A673 (cell line): ENCODE measurements at regions of chr19 and their contacts with region 1.

Region 1: DNA sequence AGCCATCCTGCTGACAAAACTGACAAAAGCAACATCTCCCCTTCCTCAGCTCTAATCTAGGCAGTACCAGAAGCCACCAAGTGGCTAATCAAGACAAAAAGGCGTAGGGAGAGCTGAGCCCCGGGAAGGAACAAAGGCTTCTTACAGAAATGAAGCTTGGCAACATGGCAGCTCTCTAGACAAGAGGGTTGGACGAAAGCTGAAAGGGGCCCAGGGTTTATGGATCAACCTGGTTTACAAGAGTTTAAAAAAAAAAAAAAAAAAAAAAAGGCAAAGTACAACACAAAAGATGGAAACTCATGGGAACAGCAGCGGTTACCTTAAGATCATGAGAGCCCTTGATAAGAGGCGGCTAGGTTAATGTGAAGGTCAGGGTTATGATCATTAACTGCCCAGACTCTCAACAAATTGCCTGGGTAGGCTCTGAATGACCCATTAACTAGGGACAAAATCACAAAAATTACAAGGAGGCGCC is 14.0 kb downstream of the ZC3H4 start:
- DNase-seq: no peak
- H3K4me3 ChIP-seq: no peak overlapping the region
- H3K27ac ChIP-seq: no peak overlapping the region
- H3K4me1 ChIP-seq: peaks cover 17% of the 10 kb centered on the region
- H3K27me3 ChIP-seq: no peaks in the 10 kb centered on the region
- CTCF ChIP-seq: no peak

Region 2: DNA sequence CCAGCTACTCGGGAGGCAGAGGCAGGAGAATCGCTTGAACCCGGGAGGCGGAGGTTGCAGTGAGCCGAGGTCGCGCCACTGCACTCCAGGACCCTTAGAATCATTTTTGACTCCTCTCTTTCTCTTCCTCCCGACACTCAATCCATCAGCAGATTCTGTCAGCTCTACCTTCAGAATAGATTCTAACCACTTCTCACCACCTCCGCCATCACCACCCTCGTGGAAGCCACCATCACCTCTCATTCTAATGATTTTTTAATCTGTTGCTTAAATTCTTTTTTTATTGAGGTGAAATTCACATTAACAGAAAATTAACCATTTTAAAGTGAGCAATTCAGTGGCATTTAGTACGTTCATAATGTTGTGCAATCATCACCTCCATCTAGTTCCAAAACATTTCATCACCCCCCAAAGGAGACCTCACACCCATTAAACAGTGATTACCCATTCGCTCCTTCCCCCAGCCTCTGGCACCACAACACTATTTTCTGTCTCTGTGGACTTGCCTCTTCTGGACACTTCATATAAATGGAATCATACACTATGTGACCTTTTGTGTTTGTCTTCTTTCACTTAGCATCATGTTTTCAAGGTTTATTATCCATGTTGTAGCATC is 1109.4 kb before region 1 on chr19:
- CTCF ChIA-PET with region 1: no interaction called
- POLR2A ChIA-PET with region 1: no interaction called
- intact Hi-C with region 1: no loop called
- DNase-seq: no peak
- H3K4me3 ChIP-seq: no peak overlapping the region
- H3K27ac ChIP-seq: no peak overlapping the region
- H3K4me1 ChIP-seq: no peaks in the 10 kb centered on the region
- H3K27me3 ChIP-seq: no peaks in the 10 kb centered on the region
- CTCF ChIP-seq: no peak

Region 3: GRCh38 chr19:47013041-47013517 is 86.5 kb before region 1 on chr19:
- CTCF ChIA-PET with region 1: interaction called, 11 read pairs
- POLR2A ChIA-PET with region 1: no interaction called
- intact Hi-C with region 1: no loop called
- DNase-seq: peak; percentile 86
- H3K4me3 ChIP-seq: no peak overlapping the region
- H3K27ac ChIP-seq: no peak overlapping the region
- H3K4me1 ChIP-seq: no peaks in the 10 kb centered on the region
- H3K27me3 ChIP-seq: no peaks in the 10 kb centered on the region
- CTCF ChIP-seq: peak; percentile 99